ENCODE measurements at regions of chr2 and their contacts with region 1.

Region 1: GRCh38 chr2:161586517-161587167 is 37.6 kb upstream of the SLC4A10 start:
- DNase-seq: peak; percentile 7 to 18
- ATAC-seq: peak; percentile 43 to 68; a peak in 3 of 6 replicates
- H3K4me3 ChIP-seq: no peak overlapping the region
- H3K27ac ChIP-seq: no peak overlapping the region
- H3K4me1 ChIP-seq: no peaks in the 10 kb centered on the region
- CTCF ChIP-seq: peak; percentile 76
- EP300 ChIP-seq: no peak
- POLR2A ChIP-seq: no peak
- RAD21 ChIP-seq: peak; percentile 75 to 78

Region 2: GRCh38 chr2:161946489-161947107 is 360.0 kb after region 1 on chr2:
- CTCF ChIA-PET with region 1: interaction called, 29 read pairs
- POLR2A ChIA-PET with region 1: no interaction called
- DNase-seq: peak in 1 of 2 experiments; percentile 12
- ATAC-seq: peak in 1 of 2 experiments; percentile 59; a peak in 2 of 6 replicates
- H3K4me3 ChIP-seq: no peak overlapping the region
- H3K27ac ChIP-seq: no peak overlapping the region
- H3K4me1 ChIP-seq: no peaks in the 10 kb centered on the region
- CTCF ChIP-seq: peak; percentile 70
- EP300 ChIP-seq: no peak
- POLR2A ChIP-seq: no peak
- RAD21 ChIP-seq: peak; percentile 70 to 77

Region 3: DNA sequence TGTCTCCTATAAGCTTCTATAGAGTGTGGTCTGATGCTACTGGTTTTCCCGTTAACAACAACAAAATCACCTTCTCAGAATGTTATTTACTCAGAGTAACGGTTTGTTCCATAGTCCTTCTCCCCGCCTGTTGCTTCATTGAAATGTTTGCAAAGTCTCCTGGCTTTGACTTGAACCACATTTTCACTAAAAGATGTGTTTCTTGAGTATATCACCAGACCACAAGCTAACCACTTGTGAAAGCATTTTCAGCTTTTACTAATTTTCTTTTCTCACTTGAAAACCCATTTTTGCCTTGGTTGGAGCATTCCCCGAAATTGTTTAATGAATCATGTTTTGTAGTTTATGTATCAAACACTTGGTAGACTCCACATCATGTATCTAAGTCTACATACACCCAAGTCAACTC is 366.1 kb after region 1 on chr2:
- CTCF ChIA-PET with region 1: interaction called, 29 read pairs
- POLR2A ChIA-PET with region 1: no interaction called
- DNase-seq: no peak
- ATAC-seq: no peak
- H3K4me3 ChIP-seq: no peak overlapping the region
- H3K27ac ChIP-seq: no peak overlapping the region
- H3K4me1 ChIP-seq: no peaks in the 10 kb centered on the region
- CTCF ChIP-seq: no peak
- EP300 ChIP-seq: no peak
- POLR2A ChIP-seq: no peak
- RAD21 ChIP-seq: no peak

Region 4: DNA sequence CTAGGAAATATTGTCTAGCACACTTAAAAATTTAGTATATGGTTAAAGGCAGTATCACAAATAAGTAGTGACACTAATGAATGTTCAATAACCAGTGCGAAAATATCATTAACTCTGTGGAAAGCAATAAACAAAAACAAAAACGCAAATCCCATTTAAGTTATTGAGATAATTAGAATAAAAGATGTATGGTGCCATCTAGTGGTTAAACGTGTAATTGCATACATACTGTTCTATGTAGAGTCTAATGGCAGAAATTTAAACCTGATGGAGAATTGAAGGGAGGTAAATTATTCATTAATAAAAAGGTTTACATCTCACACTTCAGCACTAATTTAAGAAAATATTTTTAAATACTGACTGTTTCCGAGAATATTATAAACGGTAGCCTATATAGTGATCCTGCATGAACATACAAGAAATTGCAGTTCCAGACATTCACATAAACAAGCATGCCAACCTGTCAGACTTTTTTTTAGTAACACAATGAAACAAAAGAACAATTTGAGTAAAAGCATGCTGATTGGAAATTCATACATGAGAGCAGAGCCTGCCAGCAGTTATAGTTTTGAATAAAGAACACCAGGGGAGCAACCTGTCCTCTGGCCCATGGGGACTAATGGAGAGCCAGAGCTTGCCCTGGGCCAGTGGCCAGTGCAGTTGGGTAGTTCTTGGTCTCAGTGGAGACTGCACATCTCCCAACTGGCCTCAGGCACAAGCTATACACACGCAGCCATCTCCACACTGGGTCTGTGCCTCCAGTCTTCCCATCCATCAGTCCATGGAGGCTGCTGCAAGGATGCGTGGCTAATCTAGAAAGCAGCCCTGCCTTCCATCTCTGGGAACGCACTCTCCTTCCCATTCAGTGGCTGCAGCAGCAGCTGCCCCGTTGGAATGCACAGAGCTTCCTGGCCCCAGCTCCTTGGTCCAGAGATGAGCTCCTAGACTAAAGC is 537.4 kb after region 1 on chr2:
- CTCF ChIA-PET with region 1: interaction called, 16 read pairs
- POLR2A ChIA-PET with region 1: no interaction called
- DNase-seq: peak; percentile 35 to 51
- ATAC-seq: peak; percentile 67 to 78; a peak in 3 of 6 replicates
- H3K4me3 ChIP-seq: no peak overlapping the region
- H3K27ac ChIP-seq: no peak overlapping the region
- H3K4me1 ChIP-seq: no peaks in the 10 kb centered on the region
- CTCF ChIP-seq: peak; percentile 70
- EP300 ChIP-seq: no peak
- POLR2A ChIP-seq: no peak
- RAD21 ChIP-seq: peak; percentile 72 to 76

Measured in A549 (cell line).